Activated CD4-positive, alpha-beta memory T cell treated with anti-CD3 and anti-CD28 coated beads for 36 hours (primary cell): ENCODE measurements at regions of chrX and their contacts with region 1.

Region 1: DNA sequence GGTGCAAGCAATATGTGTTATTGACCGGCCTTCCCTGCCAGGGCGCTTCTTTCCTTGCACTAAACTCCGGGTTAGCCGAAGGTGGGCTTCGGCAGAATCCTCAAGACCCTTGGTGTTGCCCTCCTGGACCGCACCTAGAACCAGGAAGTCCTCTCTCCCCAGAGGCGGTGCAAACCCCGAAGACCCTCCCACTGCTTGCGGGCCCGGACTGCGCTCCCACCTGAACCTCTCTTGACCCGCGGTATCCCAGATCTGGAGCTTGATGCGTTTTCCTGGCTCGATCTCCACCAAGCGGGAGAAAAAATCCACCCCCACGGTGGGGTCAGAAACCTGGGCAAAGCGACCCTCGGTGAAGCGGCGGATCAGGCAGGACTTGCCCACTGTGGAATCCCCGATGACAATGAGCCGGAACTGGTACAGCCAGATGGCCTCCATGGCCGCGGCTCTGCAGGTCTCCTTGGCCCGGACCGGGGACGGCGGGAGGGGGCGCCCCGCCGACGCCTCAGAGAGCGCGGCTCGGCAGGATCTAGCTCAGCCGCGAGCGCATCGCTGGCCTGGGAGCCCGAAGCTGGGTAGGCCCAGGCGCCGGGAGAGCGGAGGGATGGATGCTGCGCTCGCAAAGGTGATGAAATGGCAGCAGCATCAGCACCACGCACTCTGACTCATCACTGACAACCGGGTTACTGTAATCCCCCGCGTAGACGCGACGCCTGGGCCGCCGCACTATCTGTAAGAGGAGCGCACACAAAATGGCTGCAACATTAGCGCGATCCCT is at the start of gene RAB39B:
- DNase-seq: peak; percentile 86
- H3K4me3 Mint-ChIP-seq: peak within 1 kb of the TSS; percentile 68
- H3K27ac Mint-ChIP-seq: peak within 1 kb of the TSS; percentile 94
- H3K4me1 Mint-ChIP-seq: peaks cover 24% of the 10 kb centered on the region
- H3K27me3 Mint-ChIP-seq: no peaks in the 10 kb centered on the region
- total RNA-seq, gene RAB39B: 13.6 to 15.3 TPM

Region 2: DNA sequence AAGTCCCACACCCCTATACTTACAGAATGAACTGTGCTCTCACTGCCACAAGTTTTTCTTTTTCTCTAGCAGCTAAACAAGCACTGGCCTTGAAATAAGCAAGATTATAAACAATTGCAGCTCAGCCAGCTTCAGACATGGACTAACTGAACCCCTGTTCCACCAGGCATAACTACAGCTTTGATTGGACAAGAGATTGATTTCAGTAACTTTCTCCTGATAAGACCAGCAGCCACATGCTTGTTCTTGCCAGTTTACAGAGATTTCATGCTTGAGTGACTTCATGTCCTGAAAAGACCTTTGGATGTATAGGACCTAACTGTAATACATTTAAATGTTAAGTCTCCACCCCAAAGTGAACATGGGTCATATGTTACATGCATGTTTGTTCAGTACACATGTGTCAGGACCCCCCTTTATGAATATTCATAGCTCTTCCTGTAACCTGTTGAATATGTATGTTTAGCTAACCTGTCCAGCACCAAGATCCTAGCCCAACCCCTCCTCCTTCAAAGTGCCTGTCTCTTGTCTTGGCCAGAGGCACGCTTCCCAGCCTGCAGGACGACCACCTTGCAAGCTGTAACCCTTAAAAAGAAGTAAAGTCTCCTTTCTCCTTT is 1902.2 kb before region 1 on chrX:
- CTCF ChIA-PET with region 1: no interaction called
- POLR2A ChIA-PET with region 1: no interaction called
- intact Hi-C with region 1: no loop called
- DNase-seq: no peak
- H3K4me3 Mint-ChIP-seq: no peak overlapping the region
- H3K27ac Mint-ChIP-seq: no peak overlapping the region
- H3K4me1 Mint-ChIP-seq: no peaks in the 10 kb centered on the region
- H3K27me3 Mint-ChIP-seq: no peaks in the 10 kb centered on the region

Region 3: DNA sequence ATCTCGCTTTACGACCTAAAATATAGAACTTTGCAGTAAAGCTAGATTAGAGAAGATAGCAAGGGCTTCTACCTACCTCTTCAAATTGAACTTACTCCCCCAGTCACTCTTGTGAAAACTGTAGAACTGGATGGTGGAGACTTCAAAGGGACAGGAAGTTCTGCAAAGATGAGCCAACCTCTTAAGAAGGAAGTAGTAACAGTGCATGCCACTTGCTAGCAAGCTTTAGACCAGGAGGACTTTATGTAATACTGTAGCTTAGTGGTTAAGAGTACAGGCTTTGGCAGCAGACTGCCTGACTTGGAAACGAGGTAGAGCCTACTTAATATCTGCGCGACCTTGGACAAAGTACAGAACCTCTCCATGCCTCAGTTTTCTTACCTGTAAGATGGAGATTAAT is 75.3 kb before region 1 on chrX:
- CTCF ChIA-PET with region 1: no interaction called
- POLR2A ChIA-PET with region 1: no interaction called
- intact Hi-C with region 1: loop called (anchors 2 kb)
- DNase-seq: peak; percentile 9
- H3K4me3 Mint-ChIP-seq: no peak overlapping the region
- H3K27ac Mint-ChIP-seq: peak overlapping the region; percentile 65
- H3K4me1 Mint-ChIP-seq: peaks cover 36% of the 10 kb centered on the region
- H3K27me3 Mint-ChIP-seq: no peaks in the 10 kb centered on the region

Region 4: GRCh38 chrX:155767051-155767875 is 503.2 kb after region 1 on chrX:
- CTCF ChIA-PET with region 1: no interaction called
- POLR2A ChIA-PET with region 1: no interaction called
- intact Hi-C with region 1: loop called (anchors 2 kb)
- DNase-seq: peak; percentile 52
- H3K4me3 Mint-ChIP-seq: peak overlapping the region; percentile 76
- H3K27ac Mint-ChIP-seq: no peak overlapping the region
- H3K4me1 Mint-ChIP-seq: peaks cover 9% of the 10 kb centered on the region
- H3K27me3 Mint-ChIP-seq: no peaks in the 10 kb centered on the region